Posterior cingulate gyrus (tissue), 11 donors: ENCODE measurements at regions of chr4 and their contacts with region 1.

Region 1: GRCh38 chr4:8403173-8403753 is 37.3 kb downstream of the ACOX3 start:
- DNase-seq: peak; percentile 69 to 97 (median 89)

Region 2: DNA sequence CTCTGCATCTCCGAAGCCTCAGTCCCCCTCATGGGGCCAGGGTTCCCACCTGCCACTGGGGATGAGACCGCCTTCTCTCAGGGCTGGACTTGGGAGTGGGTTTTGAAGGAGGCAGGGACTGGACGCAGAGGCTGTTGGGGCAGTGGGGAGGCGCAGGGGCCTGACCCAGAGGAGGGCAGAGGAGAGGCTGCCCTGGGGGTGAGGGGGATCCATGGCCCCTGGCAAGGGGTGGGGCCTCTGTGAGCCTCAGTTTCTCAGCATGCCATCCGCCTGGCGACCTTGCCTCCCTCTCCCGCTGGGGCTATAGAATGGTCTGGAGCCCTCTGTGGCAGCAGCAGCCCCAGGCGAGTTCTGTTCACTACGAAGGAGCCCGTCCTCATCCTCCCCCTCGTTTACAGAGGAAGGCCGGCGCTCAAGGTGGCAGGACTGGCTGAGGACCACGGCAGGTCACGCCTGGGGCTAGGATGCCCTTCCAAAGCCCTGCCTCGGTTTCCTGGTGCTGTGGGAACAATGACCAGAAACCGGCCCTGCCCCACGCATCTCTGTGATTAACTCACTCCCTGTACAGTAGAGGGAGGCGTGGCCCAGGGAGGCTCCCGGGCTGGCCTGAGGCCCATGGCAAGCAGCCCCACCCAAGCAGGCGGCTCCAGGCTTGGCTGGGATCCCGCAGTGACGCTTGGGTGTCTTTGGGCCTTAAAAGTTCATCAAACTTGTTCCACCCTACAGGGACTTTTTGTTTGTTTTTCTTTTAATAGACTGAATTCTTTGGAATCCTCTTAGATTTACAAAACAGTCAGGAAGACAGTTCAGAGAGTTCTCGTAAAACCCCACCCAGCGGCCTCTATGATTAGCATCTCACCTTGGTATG is 220.2 kb before region 1 on chr4:
- intact Hi-C with region 1: loop called (anchors 10 kb)
- DNase-seq: no peak

Region 3: GRCh38 chr4:8241895-8242696 is 161.2 kb before region 1 on chr4:
- intact Hi-C with region 1: loop called (anchors 1 kb)
- DNase-seq: peak; percentile 52 to 97 (median 86)

Region 4: GRCh38 chr4:8274765-8275547 is 128.3 kb before region 1 on chr4:
- intact Hi-C with region 1: loop called (anchors 2 kb)
- DNase-seq: peak; percentile 52 to 95 (median 73)

Region 5: DNA sequence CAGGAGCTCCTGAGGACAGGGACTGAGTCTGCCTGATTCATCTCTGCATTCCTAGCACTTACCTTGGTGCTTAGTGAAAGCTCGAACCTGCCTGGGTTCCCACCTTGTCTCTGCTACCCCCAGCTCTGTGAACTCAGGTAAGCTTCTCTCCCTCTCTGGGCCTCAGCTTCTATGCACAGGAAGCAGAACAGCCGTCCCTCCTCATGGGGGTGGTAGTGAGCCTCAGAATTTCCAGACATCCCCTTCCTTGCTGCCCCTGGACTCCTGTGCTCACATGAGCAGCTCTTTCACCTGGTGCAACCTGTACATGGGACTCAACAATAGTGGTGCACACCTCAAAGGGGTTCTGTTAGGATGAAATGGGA is 82.9 kb before region 1 on chr4:
- intact Hi-C with region 1: loop called (anchors 5 kb)
- DNase-seq: peak in 1 of 10 donors; percentile 35